Activated B cell treated with CpG ODN at 0.5 μM for 24 hours (primary cell): ENCODE measurements at regions of chr15 and their contacts with region 1.

Region 1: GRCh38 chr15:64162870-64163658 is at the start of gene PPIB:
- DNase-seq: peak; percentile 91
- ATAC-seq: peak; percentile 92
- H3K4me3 Mint-ChIP-seq: peak within 1 kb of the TSS; percentile 88
- H3K27ac Mint-ChIP-seq: peak within 1 kb of the TSS; percentile 99
- H3K4me1 Mint-ChIP-seq: peaks cover 55% of the 10 kb centered on the region
- H3K27me3 Mint-ChIP-seq: no peaks in the 10 kb centered on the region
- CTCF ChIP-seq: no peak
- total RNA-seq, gene PPIB: 225 and 227 TPM in 2 replicates

Region 2: GRCh38 chr15:63999177-63999576 is 163.9 kb before region 1 on chr15:
- CTCF ChIA-PET with region 1: no interaction called
- POLR2A ChIA-PET with region 1: no interaction called
- intact Hi-C with region 1: no loop called
- DNase-seq: no peak
- ATAC-seq: no peak
- H3K4me3 Mint-ChIP-seq: no peak overlapping the region
- H3K27ac Mint-ChIP-seq: no peak overlapping the region
- H3K4me1 Mint-ChIP-seq: peaks cover 16% of the 10 kb centered on the region
- H3K27me3 Mint-ChIP-seq: no peaks in the 10 kb centered on the region
- CTCF ChIP-seq: no peak

Region 3: DNA sequence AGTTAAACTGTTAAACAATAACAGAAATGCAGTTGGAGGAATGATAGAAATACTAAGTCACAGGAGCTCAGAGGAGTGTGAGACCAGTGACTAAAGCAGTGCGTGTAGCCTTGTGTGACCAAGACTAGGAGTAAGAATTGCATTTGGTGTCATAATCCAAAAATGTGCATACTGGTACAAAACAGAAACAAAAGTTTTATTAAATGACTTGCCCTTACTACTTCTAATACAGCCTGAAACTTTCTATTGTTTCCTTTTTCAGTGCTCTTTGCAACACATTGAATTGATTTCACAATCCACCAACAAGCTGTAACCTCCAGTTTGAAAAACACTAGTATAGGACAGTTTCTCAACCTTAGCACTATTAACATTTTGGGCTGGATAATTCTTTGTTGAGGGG is 50.2 kb before region 1 on chr15:
- CTCF ChIA-PET with region 1: no interaction called
- POLR2A ChIA-PET with region 1: no interaction called
- intact Hi-C with region 1: no loop called
- DNase-seq: no peak
- ATAC-seq: no peak
- H3K4me3 Mint-ChIP-seq: no peak overlapping the region
- H3K27ac Mint-ChIP-seq: peak overlapping the region; percentile 83
- H3K4me1 Mint-ChIP-seq: peaks cover 59% of the 10 kb centered on the region
- H3K27me3 Mint-ChIP-seq: no peaks in the 10 kb centered on the region
- CTCF ChIP-seq: no peak

Region 4: DNA sequence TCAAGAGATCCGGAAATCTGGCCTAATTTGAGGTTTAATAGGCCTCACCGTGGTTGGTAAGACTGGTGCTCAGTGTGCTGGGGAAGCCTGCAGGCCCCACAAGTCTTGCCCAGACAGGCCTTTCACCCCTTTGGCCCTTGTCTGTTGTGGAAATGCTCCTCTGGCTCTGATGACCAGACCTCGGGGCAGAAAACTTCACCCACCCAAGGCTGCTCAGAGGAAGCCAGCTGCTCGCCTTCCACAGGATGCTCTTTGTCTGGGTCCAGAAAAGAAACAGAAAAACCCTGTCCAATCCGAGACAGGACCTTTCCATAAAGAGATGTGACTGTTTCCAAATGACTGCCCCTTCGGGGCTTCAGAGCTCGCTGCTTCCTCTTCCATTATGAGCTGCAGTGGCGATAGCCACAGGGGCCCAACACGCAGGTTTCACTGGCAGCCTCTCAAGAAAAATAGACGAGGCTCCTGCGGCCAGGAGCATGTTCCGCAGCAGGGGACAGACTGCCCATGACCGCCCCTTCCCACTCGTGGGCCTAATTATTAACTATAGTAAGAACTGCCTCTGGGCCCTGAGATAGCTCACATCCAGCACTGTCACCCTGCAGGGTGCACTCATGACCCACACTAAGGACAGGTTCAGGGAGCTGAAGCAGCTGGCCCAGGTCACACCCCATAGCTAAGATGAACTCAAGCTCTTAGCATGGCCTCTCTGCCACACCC is 18.3 kb before region 1 on chr15:
- CTCF ChIA-PET with region 1: interaction called, 6 read pairs
- POLR2A ChIA-PET with region 1: interaction called, 124 read pairs
- intact Hi-C with region 1: no loop called
- DNase-seq: no peak
- ATAC-seq: peak; percentile 87
- H3K4me3 Mint-ChIP-seq: peak overlapping the region; percentile 33
- H3K27ac Mint-ChIP-seq: peak overlapping the region; percentile 92
- H3K4me1 Mint-ChIP-seq: peaks cover 32% of the 10 kb centered on the region
- H3K27me3 Mint-ChIP-seq: no peaks in the 10 kb centered on the region
- CTCF ChIP-seq: no peak

Region 5: GRCh38 chr15:64180235-64180837 is 17.3 kb after region 1 on chr15:
- CTCF ChIA-PET with region 1: interaction called, 8 read pairs
- POLR2A ChIA-PET with region 1: interaction called, 34 read pairs
- intact Hi-C with region 1: loop called (anchors 1 kb)
- DNase-seq: peak; percentile 40
- ATAC-seq: peak; percentile 99
- H3K4me3 Mint-ChIP-seq: peak overlapping the region; percentile 56
- H3K27ac Mint-ChIP-seq: peak overlapping the region; percentile 85
- H3K4me1 Mint-ChIP-seq: peaks cover 26% of the 10 kb centered on the region
- H3K27me3 Mint-ChIP-seq: no peaks in the 10 kb centered on the region
- CTCF ChIP-seq: no peak

Region 6: GRCh38 chr15:64209680-64210334 is 46.7 kb after region 1 on chr15:
- CTCF ChIA-PET with region 1: no interaction called
- POLR2A ChIA-PET with region 1: interaction called, 13 read pairs
- intact Hi-C with region 1: no loop called
- DNase-seq: no peak
- ATAC-seq: peak; percentile 10
- H3K4me3 Mint-ChIP-seq: no peak overlapping the region
- H3K27ac Mint-ChIP-seq: no peak overlapping the region
- H3K4me1 Mint-ChIP-seq: no peaks in the 10 kb centered on the region
- H3K27me3 Mint-ChIP-seq: no peaks in the 10 kb centered on the region
- CTCF ChIP-seq: no peak

Region 7: GRCh38 chr15:64355944-64356709 is 193.1 kb after region 1 on chr15 and contains the start of gene CSNK1G1:
- CTCF ChIA-PET with region 1: no interaction called
- POLR2A ChIA-PET with region 1: interaction called, 6 read pairs
- intact Hi-C with region 1: loop called (anchors 1 kb)
- DNase-seq: peak; percentile 84
- ATAC-seq: peak; percentile 98
- H3K4me3 Mint-ChIP-seq: peak within 1 kb of the TSS; percentile 87
- H3K27ac Mint-ChIP-seq: peak within 1 kb of the TSS; percentile 80
- H3K4me1 Mint-ChIP-seq: peaks cover 17% of the 10 kb centered on the region
- H3K27me3 Mint-ChIP-seq: no peaks in the 10 kb centered on the region
- CTCF ChIP-seq: no peak
- total RNA-seq, gene CSNK1G1: 26.1 and 26.6 TPM in 2 replicates

Region 8: GRCh38 chr15:64387562-64388168 is 224.6 kb after region 1 on chr15 and contains the start of gene TRIP4:
- CTCF ChIA-PET with region 1: no interaction called
- POLR2A ChIA-PET with region 1: interaction called, 31 read pairs
- intact Hi-C with region 1: loop called (anchors 1 kb)
- DNase-seq: peak; percentile 92
- ATAC-seq: peak; percentile 100
- H3K4me3 Mint-ChIP-seq: peak within 1 kb of the TSS; percentile 98
- H3K27ac Mint-ChIP-seq: peak within 1 kb of the TSS; percentile 94
- H3K4me1 Mint-ChIP-seq: peaks cover 25% of the 10 kb centered on the region
- H3K27me3 Mint-ChIP-seq: no peaks in the 10 kb centered on the region
- CTCF ChIP-seq: no peak
- total RNA-seq, gene TRIP4: 26.3 and 35.0 TPM in 2 replicates

Region 9: DNA sequence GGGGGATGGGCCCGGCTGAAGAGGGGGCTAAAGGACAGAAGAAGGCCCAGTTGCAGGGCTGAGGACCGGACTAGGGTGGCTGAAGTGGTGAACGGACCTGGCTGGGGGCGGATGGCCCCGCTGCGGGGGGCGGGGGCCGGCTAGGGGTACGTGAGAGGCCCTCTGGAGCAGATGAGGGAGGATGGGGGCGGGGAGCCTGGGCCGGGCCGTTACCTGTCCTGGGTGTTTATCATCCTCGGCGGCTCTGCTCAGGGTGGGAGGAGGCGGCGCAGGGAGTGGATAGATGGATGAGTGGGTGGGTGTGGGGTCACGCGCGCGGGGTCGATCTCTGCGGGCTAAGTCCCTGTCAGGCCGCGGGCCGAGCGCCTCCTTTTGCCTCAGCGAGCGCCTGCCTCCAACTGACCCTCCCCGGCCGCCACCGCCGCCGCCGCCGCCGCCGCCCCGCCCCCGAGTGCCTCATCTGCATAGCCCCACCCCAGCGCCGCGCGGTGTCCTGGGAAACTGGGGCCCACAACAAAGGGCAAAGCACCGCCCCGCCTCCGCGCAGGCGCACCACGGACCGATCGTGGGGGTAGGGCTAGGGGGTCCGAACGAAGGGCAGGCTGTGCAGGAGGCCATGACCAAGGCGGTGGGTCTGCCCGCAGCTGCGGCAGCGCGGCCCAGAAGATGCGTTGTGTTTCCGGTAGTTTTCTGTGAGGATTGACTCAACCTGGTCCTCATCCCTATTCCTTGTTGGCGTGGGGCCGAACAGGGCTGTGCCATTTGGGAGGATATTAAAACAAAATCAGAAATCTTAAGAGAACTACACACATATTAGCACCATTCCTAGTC is 540.0 kb after region 1 on chr15:
- CTCF ChIA-PET with region 1: no interaction called
- POLR2A ChIA-PET with region 1: no interaction called
- intact Hi-C with region 1: loop called (anchors 5 kb)
- DNase-seq: peak; percentile 96
- ATAC-seq: peak; percentile 94
- H3K4me3 Mint-ChIP-seq: peak overlapping the region; percentile 89
- H3K27ac Mint-ChIP-seq: peak overlapping the region; percentile 82
- H3K4me1 Mint-ChIP-seq: peaks cover 53% of the 10 kb centered on the region
- H3K27me3 Mint-ChIP-seq: no peaks in the 10 kb centered on the region
- CTCF ChIP-seq: no peak